Right ventricle myocardium superior (tissue), 1 donor: ENCODE measurements at regions of chr1 and their contacts with region 1.

Region 1: DNA sequence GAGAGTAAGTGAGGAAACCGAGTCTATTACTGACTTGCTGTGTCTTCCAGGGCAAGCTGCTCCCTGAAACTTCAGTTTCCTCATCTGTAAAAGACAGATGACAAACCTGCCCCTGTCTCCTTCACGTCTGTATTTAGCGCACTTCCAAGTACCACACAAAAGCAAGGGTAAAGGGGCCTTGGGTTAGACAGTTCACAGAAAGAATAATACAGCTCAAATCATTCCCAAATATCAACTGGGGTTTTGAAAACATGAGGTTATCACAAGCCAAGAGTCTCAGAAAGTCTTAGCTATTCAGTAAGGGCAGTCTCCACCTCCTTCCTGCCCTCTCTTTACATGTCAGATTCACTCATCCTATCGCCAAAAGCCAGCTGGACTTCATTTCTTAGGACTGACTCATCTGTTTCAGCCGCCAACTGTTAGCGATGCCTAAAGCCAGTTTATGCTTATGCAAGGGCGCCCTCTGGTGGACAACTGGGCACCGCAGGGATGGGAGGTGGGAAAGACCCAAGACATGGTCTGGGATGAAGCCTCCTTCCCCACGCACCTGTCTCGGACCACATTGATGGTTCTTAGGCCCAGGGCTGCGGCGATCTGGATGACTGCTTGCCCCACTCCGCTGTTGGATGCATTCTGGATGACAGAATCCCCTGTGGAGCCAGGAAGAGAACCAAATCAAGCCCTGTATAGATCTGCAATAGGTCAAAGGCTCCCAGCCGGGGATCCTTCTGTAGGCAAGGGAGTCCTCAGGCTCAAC is 21.1 kb upstream of the SRSF4 start:
- DNase-seq: peak; percentile 96
- ATAC-seq: peak; percentile 96

Region 2: DNA sequence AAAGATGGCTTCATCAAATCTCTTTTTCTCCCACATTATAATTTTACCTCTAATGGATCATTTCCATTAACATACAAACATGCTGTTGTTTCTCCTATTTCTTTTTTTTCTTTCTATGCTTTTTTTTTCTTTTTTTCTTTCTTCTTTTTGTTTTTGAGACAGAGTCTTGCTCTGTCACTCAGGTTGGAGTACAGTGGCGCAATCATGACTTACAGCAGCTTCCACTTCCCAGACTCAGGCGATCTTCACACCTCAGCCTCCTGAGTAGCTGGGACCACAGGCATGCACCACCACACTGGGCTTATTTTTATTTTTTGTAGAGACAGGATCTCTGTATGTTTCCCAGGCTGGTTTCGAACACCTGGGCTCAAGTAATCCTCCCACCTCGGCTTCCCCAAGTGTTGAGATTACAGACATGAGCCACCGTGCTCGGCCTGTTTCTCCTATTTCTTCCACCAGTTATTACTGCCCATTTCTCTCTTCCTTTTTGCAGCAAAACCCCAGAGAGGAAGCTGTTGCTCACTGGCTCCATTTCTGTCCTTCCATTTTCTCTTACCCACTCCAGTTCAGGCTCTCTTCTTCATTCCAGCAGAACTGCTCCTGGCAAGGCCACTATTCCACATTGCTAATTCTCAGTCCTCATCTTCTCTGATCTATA is 422.9 kb before region 1 on chr1:
- intact Hi-C with region 1: loop called (anchors 10 kb)
- DNase-seq: no peak
- ATAC-seq: no peak

Region 3: DNA sequence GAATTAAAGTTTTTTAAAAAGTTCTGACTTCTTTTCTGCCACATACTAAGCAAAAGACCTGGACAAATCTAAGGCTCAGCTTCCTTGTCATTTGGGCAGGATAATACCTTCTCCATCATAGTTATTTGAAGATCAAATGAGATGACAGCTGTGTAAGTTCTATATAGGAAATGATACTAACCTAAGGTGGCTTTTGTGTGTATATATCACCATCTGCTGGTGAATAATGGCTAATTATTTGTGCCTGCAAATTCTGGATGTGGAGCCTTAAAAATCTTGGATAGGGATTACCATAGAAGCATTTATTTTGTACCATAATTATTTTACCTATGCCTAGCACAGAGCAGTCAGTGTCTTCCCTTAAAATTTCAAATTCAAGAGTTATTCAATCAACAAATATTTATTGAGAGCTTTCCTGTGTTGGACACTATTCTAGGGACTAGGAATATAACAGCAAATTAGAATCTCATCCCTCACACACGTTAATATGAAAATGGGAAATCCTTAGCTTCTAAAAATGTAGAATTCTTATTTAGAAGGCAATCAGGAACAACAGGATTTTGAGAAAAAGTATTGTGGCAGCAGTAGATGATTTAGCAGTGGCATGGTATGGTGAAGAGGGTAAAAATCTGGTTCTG is 168.8 kb before region 1 on chr1:
- intact Hi-C with region 1: loop called (anchors 10 kb)
- DNase-seq: no peak
- ATAC-seq: peak; percentile 65